ENCODE measurements at regions of chr5 and their contacts with region 1.

Region 1: DNA sequence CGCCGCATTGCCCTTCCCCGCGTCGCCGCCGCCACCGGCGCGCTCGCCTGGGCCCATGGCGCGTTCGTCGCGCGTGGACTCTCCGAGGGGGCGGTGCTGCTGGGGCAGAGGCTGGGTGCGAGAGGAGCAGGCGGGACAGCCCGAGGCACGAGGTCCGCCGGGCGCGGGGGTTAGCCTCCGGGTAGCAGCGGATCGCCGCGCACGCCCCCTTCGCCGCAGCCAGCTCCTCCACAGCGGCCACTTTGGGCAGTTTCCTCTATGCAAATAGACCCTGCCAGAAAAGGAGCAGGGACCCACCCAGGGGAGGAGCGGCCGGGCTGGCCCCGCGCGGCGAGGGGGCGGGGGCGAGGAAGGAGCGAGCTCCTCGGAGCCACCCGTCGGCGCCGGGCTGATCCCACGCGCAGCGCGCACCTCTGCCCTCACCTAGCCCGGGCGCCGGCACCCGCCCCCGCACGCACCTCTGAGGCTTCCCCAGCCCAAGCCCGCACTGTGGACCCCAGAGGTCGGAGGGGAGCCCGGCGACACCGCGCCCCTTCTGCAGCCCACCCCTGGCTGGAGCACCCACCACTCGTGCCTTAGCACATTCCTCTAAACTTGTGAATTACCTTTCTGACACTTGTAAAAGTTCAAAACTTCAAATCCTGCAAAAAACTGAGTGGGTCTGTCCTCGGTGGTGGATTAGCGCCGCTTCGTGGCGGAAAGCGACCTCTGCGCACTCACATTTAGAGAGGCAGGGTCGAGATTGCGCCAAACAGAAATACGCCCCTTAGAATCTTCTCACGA is at the start of gene COL23A1:
- DNase-seq: peak; percentile 21 to 48 (median 36)
- ATAC-seq: peak; percentile 72
- H3K4me3 ChIP-seq: peak within 1 kb of the TSS; percentile 0
- H3K4me3 Mint-ChIP-seq: peak within 1 kb of the TSS; percentile 73 to 91 (median 84)
- H3K27ac ChIP-seq: no peak within 1 kb of the TSS
- H3K27ac Mint-ChIP-seq: no peak within 1 kb of the TSS
- H3K4me1 ChIP-seq: no peaks in the 10 kb centered on the region
- H3K4me1 Mint-ChIP-seq: peaks cover 0 to 13% (median 7%) of the 10 kb centered on the region in 7 donors
- H3K27me3 ChIP-seq: peaks cover 0 to 5% of the 10 kb centered on the region in 2 donors
- H3K27me3 Mint-ChIP-seq: peaks cover 48 to 58% (median 53%) of the 10 kb centered on the region in 5 donors
- total RNA-seq, gene COL23A1: 0.13 to 0.32 (median 0.22) TPM in 3 of 5 experiments, not detected in the others

Region 2: DNA sequence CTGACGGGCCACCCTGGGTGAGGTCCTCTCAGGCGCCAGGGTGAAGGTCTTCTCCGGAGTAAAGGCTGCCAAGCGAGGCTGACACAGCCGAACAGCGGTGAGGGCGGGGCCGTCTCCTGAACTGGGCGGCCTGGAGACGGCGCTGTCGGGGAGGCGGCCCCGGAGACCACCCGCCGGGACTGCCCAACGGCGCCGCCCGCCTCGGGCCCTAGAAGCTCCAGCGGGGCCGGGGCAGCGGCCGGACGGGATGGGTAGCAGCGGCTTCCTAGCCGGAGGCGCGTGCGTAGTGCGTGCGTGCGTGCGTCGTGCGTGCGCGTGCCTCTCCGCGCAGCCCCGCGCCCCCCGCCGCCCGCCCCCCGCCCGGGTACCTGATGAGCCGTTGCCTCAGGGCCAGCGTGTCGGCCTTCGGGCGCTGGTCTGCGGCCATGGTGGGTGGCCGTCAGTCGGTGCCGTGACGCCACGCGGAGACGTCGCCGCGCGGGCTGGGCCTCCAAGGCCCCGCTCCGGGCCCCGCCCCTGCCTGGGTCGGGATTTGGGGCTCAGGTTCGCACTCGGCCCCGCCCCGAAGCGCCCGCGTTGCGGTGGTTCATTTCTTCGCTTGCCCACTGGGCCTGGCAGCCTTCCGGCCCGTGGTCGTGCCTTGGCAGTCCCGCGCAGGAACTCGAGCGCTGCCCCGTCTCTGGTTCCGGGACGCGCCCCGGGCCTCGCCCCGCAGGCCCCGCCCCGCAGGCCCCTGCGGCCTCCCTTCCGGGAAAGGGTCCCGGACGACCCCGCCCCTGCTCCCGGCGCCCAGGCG is 358.0 kb before region 1 on chr5 and contains the start of gene PHYKPL:
- CTCF ChIA-PET with region 1: interaction called, 3 read pairs
- POLR2A ChIA-PET with region 1: no interaction called
- intact Hi-C with region 1: loop called in 1 of 2 experiments (anchors 2 kb)
- DNase-seq: peak; percentile 48 to 78 (median 63)
- ATAC-seq: peak; percentile 81
- H3K4me3 ChIP-seq: peak within 1 kb of the TSS; percentile 63
- H3K4me3 Mint-ChIP-seq: peak within 1 kb of the TSS; percentile 75 to 90 (median 84)
- H3K27ac ChIP-seq: peak within 1 kb of the TSS; percentile 95
- H3K27ac Mint-ChIP-seq: peak within 1 kb of the TSS; percentile 75 to 92 (median 86)
- H3K4me1 ChIP-seq: peaks cover 29 to 38% of the 10 kb centered on the region in 2 donors
- H3K4me1 Mint-ChIP-seq: peaks cover 38 to 73% (median 58%) of the 10 kb centered on the region in 7 donors
- H3K27me3 ChIP-seq: no peaks in the 10 kb centered on the region
- H3K27me3 Mint-ChIP-seq: no peaks in the 10 kb centered on the region
- total RNA-seq, gene PHYKPL: 107 to 265 (median 176) TPM

Region 3: DNA sequence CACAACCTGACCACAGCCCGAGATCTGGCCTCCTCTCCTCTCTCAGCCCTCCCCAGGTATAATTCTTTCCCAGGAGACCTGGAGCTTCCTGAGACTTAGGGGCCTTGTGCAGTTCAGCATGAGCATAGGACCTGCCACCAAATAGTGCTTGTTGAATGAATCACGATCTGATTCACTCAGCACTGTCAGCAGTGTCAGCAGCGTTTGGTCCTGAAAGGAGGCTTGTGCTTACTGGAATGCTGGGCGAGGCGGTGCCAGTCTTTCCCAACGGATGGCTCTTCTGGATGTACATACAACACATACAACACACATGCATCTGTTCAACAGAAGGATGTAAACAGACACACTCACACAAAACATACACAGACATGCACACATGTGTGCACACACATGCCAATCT is 173.4 kb before region 1 on chr5:
- CTCF ChIA-PET with region 1: no interaction called
- POLR2A ChIA-PET with region 1: no interaction called
- intact Hi-C with region 1: no loop called
- DNase-seq: no peak
- ATAC-seq: no peak
- H3K4me3 ChIP-seq: no peak overlapping the region
- H3K4me3 Mint-ChIP-seq: no peak overlapping the region
- H3K27ac ChIP-seq: no peak overlapping the region
- H3K27ac Mint-ChIP-seq: no peak overlapping the region
- H3K4me1 ChIP-seq: no peaks in the 10 kb centered on the region
- H3K4me1 Mint-ChIP-seq: peaks cover 0 to 6% (median 5%) of the 10 kb centered on the region in 7 donors
- H3K27me3 ChIP-seq: no peaks in the 10 kb centered on the region
- H3K27me3 Mint-ChIP-seq: peaks cover 5 to 30% (median 9%) of the 10 kb centered on the region in 5 donors

Region 4: GRCh38 chr5:179438011-179438441 is 847.7 kb after region 1 on chr5:
- CTCF ChIA-PET with region 1: no interaction called
- POLR2A ChIA-PET with region 1: no interaction called
- intact Hi-C with region 1: no loop called
- DNase-seq: no peak
- ATAC-seq: no peak
- H3K4me3 ChIP-seq: no peak overlapping the region
- H3K4me3 Mint-ChIP-seq: no peak overlapping the region
- H3K27ac ChIP-seq: no peak overlapping the region
- H3K27ac Mint-ChIP-seq: no peak overlapping the region
- H3K4me1 ChIP-seq: no peaks in the 10 kb centered on the region
- H3K4me1 Mint-ChIP-seq: no peaks in the 10 kb centered on the region
- H3K27me3 ChIP-seq: no peaks in the 10 kb centered on the region
- H3K27me3 Mint-ChIP-seq: peaks cover 0 to 24% (median 11%) of the 10 kb centered on the region in 5 donors

Measured in naive thymus-derived CD4-positive, alpha-beta T cell (primary cell).